ENCODE measurements at regions of chr2 and their contacts with region 1.

Region 1: GRCh38 chr2:174971865-174972781 is 33.1 kb downstream of the CHN1 start:
- DNase-seq: peak; percentile 91

Region 2: GRCh38 chr2:174771631-174772471 is 200.3 kb before region 1 on chr2:
- in situ Hi-C with region 1: loop called (anchors 5 kb)
- DNase-seq: peak; percentile 84